Vagina (tissue), 2 donors: ENCODE measurements at regions of chr4 and their contacts with region 1.

Region 1: DNA sequence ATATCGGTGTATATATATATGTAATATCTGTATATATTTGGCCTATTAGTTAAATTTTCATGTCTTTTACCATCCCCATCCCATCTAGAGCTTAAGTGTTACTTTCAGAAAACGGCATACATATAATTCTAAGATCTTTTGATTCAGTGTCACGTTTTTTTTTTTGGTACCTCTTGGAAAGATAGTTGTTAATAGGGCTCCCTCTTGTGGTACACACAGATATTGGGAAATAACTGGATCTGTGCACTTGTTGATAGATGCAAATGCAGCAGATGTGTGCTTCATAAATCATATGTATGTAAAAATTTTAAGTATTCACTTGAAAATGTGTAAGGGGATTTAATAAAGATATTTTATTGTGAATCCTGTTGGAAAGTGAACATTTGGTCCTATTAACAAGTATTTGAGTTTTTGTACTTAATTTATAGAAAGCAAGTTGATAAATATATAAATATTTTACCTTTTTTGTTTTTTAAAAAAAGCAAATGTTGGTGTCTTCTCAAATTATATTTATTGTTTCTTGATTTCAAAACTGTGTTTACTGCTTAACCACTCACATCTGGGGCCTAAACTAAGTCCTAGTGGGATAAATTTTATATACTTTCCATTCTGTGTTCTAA is 74.7 kb downstream of the PAQR3 start:
- DNase-seq: no peak
- H3K4me3 ChIP-seq: no peak overlapping the region
- H3K27ac ChIP-seq: no peak overlapping the region
- H3K4me1 ChIP-seq: no peaks in the 10 kb centered on the region
- H3K27me3 ChIP-seq: no peaks in the 10 kb centered on the region
- CTCF ChIP-seq: peak; percentile 60 to 74 (median 69)
- POLR2A ChIP-seq: no peak

Region 2: GRCh38 chr4:77950203-77950602 is 914.3 kb before region 1 on chr4:
- intact Hi-C with region 1: loop called (anchors 5 kb)
- DNase-seq: no peak
- H3K4me3 ChIP-seq: no peak overlapping the region
- H3K27ac ChIP-seq: no peak overlapping the region
- H3K4me1 ChIP-seq: no peaks in the 10 kb centered on the region
- H3K27me3 ChIP-seq: no peaks in the 10 kb centered on the region
- CTCF ChIP-seq: no peak
- POLR2A ChIP-seq: no peak

Region 3: GRCh38 chr4:78612398-78613178 is 251.9 kb before region 1 on chr4:
- intact Hi-C with region 1: loop called (anchors 10 kb)
- DNase-seq: no peak
- H3K4me3 ChIP-seq: no peak overlapping the region
- H3K27ac ChIP-seq: no peak overlapping the region
- H3K4me1 ChIP-seq: no peaks in the 10 kb centered on the region
- H3K27me3 ChIP-seq: no peaks in the 10 kb centered on the region
- CTCF ChIP-seq: peak; percentile 23 to 65 (median 62)
- POLR2A ChIP-seq: no peak

Region 4: GRCh38 chr4:78644744-78645330 is 219.7 kb before region 1 on chr4:
- intact Hi-C with region 1: loop called (anchors 10 kb)
- DNase-seq: no peak
- H3K4me3 ChIP-seq: no peak overlapping the region
- H3K27ac ChIP-seq: peak overlapping the region; percentile 74
- H3K4me1 ChIP-seq: peaks cover 38% of the 10 kb centered on the region
- H3K27me3 ChIP-seq: no peaks in the 10 kb centered on the region
- CTCF ChIP-seq: peak; percentile 81 to 91 (median 85)
- POLR2A ChIP-seq: no peak

Region 5: DNA sequence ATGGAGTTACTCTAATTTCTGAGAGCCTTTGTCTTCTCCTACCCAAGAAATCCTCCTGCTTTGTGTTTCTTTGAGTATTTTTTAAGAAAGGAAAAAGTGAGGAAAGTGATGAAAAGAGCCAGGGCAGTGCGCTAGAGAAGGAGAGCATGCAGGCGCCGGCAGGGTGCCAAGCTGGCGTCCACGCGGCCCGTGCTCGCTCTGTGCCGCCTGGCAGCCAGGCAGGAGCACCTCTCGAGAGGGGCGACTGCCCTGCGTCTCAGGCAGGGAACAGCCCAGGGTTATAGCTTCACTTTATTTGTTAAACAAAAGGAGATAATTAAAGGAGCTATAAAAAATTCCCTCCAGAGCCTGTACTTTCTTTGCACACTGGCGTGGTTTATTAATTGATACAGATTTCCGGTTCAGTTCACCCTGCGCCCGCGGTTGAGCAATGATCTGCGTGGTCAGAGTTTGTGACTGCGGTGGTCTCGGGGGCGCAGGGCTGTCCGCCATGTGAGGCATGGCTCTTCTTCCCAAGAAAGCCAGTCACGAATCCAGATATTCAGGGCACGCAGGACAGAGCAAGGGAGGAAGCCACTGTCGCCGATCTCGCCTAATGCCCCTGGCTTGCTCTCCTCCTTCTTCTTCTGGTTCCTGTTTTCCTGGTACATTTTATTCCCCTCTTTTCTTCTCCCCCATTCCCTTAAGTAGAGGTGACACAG is 185.5 kb after region 1 on chr4:
- intact Hi-C with region 1: no loop called
- DNase-seq: no peak
- H3K4me3 ChIP-seq: no peak overlapping the region
- H3K27ac ChIP-seq: no peak overlapping the region
- H3K4me1 ChIP-seq: no peaks in the 10 kb centered on the region
- H3K27me3 ChIP-seq: no peaks in the 10 kb centered on the region
- CTCF ChIP-seq: no peak
- POLR2A ChIP-seq: no peak